ENCODE measurements at regions of chr15 and their contacts with region 1.

Region 1: GRCh38 chr15:69784798-69785566 is 312.7 kb downstream of the TLE3 start:
- DNase-seq: no peak
- ATAC-seq: no peak
- H3K4me3 ChIP-seq: no peak overlapping the region
- H3K4me3 Mint-ChIP-seq: no peak overlapping the region
- H3K27ac ChIP-seq: no peak overlapping the region
- H3K27ac Mint-ChIP-seq: no peak overlapping the region
- H3K4me1 ChIP-seq: peaks cover 7 to 8% of the 10 kb centered on the region in 2 donors
- H3K4me1 Mint-ChIP-seq: peaks cover 11% of the 10 kb centered on the region
- H3K27me3 ChIP-seq: peaks cover 0 to 15% (median 0%) of the 10 kb centered on the region in 4 experiments
- H3K27me3 Mint-ChIP-seq: peaks cover 31% of the 10 kb centered on the region
- CTCF ChIP-seq: no peak

Region 2: GRCh38 chr15:69735121-69735520 is 49.9 kb before region 1 on chr15:
- CTCF ChIA-PET with region 1: no interaction called
- POLR2A ChIA-PET with region 1: interaction called, 3 read pairs
- intact Hi-C with region 1: loop called (anchors 10 kb)
- DNase-seq: no peak
- ATAC-seq: no peak
- H3K4me3 ChIP-seq: no peak overlapping the region
- H3K4me3 Mint-ChIP-seq: no peak overlapping the region
- H3K27ac ChIP-seq: no peak overlapping the region
- H3K27ac Mint-ChIP-seq: no peak overlapping the region
- H3K4me1 ChIP-seq: no peaks in the 10 kb centered on the region
- H3K4me1 Mint-ChIP-seq: peaks cover 2% of the 10 kb centered on the region
- H3K27me3 ChIP-seq: peaks cover 0 to 5% (median 2%) of the 10 kb centered on the region in 4 experiments
- H3K27me3 Mint-ChIP-seq: peaks cover 26% of the 10 kb centered on the region
- CTCF ChIP-seq: no peak

Region 3: GRCh38 chr15:69820825-69821224 is 35.8 kb after region 1 on chr15:
- CTCF ChIA-PET with region 1: no interaction called
- POLR2A ChIA-PET with region 1: no interaction called
- intact Hi-C with region 1: no loop called
- DNase-seq: no peak
- ATAC-seq: no peak
- H3K4me3 ChIP-seq: no peak overlapping the region
- H3K4me3 Mint-ChIP-seq: no peak overlapping the region
- H3K27ac ChIP-seq: no peak overlapping the region
- H3K27ac Mint-ChIP-seq: no peak overlapping the region
- H3K4me1 ChIP-seq: no peaks in the 10 kb centered on the region
- H3K4me1 Mint-ChIP-seq: no peaks in the 10 kb centered on the region
- H3K27me3 ChIP-seq: peaks cover 0 to 20% (median 0%) of the 10 kb centered on the region in 4 experiments
- H3K27me3 Mint-ChIP-seq: peaks cover 28% of the 10 kb centered on the region
- CTCF ChIP-seq: no peak